ENCODE measurements at regions of chr6 and their contacts with region 1.

Region 1: GRCh38 chr6:133055441-133055966 is 185.7 kb upstream of the EYA4 start:
- DNase-seq: no peak
- ATAC-seq: peak in 3 of 4 donors; percentile 25 to 47 (median 30)
- H3K4me3 ChIP-seq: no peak overlapping the region
- H3K27ac ChIP-seq: peak overlapping the region; percentile 41
- H3K4me1 ChIP-seq: peaks cover 8% of the 10 kb centered on the region
- H3K27me3 ChIP-seq: no peaks in the 10 kb centered on the region
- CTCF ChIP-seq: no peak

Region 2: DNA sequence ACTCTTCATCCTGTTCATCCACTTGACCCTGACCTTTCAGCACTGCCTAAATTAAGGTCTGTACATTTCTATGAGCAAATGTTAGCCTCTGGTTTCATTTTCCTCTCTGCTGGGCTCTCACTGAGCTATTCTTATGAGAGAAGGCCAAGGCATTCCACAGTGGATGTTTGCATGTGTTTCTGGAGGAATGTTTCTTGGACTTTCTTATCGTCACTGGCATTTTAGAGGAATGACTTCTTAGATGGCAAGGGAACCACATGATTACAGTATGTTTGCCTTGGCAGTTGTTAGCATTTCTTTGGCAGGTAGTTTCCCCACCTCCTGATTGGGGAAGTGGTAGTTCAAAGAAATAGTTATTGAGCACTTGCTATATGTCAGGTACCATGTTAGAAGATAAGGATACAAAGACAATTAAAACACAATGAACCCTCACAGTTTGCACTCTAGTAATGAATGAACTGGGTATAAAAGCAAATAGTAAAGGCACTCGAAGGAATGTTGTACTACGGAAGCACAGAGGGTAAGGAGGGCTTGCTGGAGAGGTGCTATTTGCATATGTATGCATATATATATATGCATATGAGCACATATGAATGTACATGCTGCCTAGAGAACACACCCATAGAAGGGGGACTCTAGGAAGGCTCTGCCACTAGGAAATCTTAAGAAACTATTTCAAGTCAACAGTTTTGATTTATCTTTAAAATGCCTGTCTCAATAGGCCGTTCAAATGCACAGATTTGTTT is 493.1 kb after region 1 on chr6:
- intact Hi-C with region 1: loop called in 1 of 2 experiments (anchors 10 kb)
- DNase-seq: no peak
- ATAC-seq: no peak
- H3K4me3 ChIP-seq: no peak overlapping the region
- H3K27ac ChIP-seq: peak overlapping the region; percentile 82
- H3K4me1 ChIP-seq: peaks cover 42% of the 10 kb centered on the region
- H3K27me3 ChIP-seq: no peaks in the 10 kb centered on the region
- CTCF ChIP-seq: no peak

Measured in psoas muscle (tissue), 8 donors.